ENCODE measurements at regions of chr14 and their contacts with region 1.

Region 1: GRCh38 chr14:68137704-68138619 is 318.4 kb downstream of the RAD51B start:
- DNase-seq: peak; percentile 98
- H3K4me3 Mint-ChIP-seq: peak overlapping the region; percentile 16
- H3K27ac Mint-ChIP-seq: peak overlapping the region; percentile 94
- H3K4me1 Mint-ChIP-seq: peaks cover 50% of the 10 kb centered on the region
- H3K27me3 Mint-ChIP-seq: no peaks in the 10 kb centered on the region
- CTCF ChIP-seq: no peak

Region 2: DNA sequence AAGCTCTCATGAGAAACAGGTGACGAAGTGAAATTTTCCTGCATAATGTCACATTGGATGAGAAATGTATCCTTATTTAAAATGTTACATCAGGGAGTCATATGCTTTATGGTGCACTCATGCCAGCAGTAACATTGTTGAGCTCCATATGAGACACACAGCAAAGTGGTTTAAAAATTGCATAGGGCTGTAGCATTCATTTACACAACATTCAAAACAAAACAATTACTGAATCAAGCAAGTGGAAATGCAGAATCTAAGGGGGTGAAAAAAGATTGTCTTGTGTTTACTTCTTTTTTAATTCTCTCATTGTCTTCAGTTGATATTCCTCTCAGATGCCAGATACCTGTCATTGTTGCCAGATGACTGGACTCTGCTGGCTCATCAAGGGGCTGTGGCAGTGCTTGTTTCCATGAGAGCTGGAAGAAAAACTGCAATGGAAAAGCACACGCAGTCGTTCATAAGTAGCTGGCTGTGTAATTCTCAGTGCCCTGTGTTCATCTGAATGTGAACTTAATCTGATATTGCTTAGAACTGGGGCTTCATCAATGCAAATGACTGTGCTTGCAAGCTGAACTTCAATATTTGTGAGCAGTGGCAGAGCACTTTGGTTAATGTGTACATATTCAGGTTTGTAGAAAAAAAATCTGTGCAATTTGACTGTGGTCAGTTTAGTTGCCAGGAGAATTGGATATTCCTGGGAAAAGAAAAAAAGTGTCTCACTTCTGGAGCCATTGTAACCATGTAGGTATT is 12.8 kb before region 1 on chr14:
- CTCF ChIA-PET with region 1: no interaction called
- POLR2A ChIA-PET with region 1: interaction called, 14 read pairs
- intact Hi-C with region 1: no loop called
- DNase-seq: no peak
- H3K4me3 Mint-ChIP-seq: no peak overlapping the region
- H3K27ac Mint-ChIP-seq: peak overlapping the region; percentile 76
- H3K4me1 Mint-ChIP-seq: peaks cover 16% of the 10 kb centered on the region
- H3K27me3 Mint-ChIP-seq: no peaks in the 10 kb centered on the region
- CTCF ChIP-seq: no peak

Region 3: DNA sequence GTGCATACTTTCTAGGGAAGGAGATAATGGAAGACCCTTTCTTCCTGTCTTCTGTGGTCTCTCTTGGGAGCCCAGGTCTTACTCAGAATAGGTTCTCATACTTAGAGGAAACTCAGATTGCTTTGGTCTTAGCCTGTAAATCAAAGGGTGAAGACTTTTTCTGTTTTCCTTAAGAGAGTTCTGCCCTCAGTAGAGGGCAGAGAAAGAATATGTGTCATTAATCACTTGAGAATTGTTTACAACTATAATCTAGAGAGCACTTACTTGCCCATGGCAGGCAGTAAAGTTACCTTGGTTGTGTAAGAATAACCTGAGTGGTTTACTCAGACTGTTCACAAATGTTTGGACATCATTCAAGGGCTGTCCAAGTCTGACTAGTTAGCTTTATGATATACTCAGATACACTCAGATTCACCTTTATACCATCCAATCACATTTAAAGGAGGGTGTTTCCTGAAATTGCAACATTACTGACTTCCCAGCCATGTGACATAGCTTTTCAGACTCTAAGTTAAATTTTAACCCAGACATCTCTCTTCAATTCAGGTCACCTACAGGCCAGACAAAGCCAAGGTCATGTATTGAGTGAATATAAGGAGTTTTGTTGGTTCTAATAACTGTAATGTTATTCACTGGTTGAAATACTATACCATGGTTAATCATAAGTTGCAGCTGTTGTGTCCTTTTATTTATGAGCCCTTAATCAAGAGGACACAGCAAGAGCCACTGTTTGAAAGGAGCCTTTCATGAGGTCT is 53.8 kb after region 1 on chr14:
- CTCF ChIA-PET with region 1: no interaction called
- POLR2A ChIA-PET with region 1: interaction called, 14 read pairs
- intact Hi-C with region 1: no loop called
- DNase-seq: peak; percentile 68
- H3K4me3 Mint-ChIP-seq: no peak overlapping the region
- H3K27ac Mint-ChIP-seq: peak overlapping the region; percentile 27
- H3K4me1 Mint-ChIP-seq: peaks cover 8% of the 10 kb centered on the region
- H3K27me3 Mint-ChIP-seq: no peaks in the 10 kb centered on the region
- CTCF ChIP-seq: no peak

Region 4: GRCh38 chr14:68232300-68233055 is 94.5 kb after region 1 on chr14:
- CTCF ChIA-PET with region 1: interaction called, 3 read pairs
- POLR2A ChIA-PET with region 1: interaction called, 9 read pairs
- intact Hi-C with region 1: loop called (anchors 2 kb)
- DNase-seq: peak; percentile 99
- H3K4me3 Mint-ChIP-seq: no peak overlapping the region
- H3K27ac Mint-ChIP-seq: no peak overlapping the region
- H3K4me1 Mint-ChIP-seq: no peaks in the 10 kb centered on the region
- H3K27me3 Mint-ChIP-seq: no peaks in the 10 kb centered on the region
- CTCF ChIP-seq: no peak

Region 5: GRCh38 chr14:68816262-68816942 is 678.4 kb after region 1 on chr14:
- CTCF ChIA-PET with region 1: no interaction called
- POLR2A ChIA-PET with region 1: interaction called, 7 read pairs
- intact Hi-C with region 1: loop called (anchors 5 kb)
- DNase-seq: peak; percentile 85
- H3K4me3 Mint-ChIP-seq: peak overlapping the region; percentile 49
- H3K27ac Mint-ChIP-seq: peak overlapping the region; percentile 88
- H3K4me1 Mint-ChIP-seq: peaks cover 20% of the 10 kb centered on the region
- H3K27me3 Mint-ChIP-seq: no peaks in the 10 kb centered on the region
- CTCF ChIP-seq: peak; percentile 98